ENCODE measurements at regions of chr9 and their contacts with region 1.

Region 1: DNA sequence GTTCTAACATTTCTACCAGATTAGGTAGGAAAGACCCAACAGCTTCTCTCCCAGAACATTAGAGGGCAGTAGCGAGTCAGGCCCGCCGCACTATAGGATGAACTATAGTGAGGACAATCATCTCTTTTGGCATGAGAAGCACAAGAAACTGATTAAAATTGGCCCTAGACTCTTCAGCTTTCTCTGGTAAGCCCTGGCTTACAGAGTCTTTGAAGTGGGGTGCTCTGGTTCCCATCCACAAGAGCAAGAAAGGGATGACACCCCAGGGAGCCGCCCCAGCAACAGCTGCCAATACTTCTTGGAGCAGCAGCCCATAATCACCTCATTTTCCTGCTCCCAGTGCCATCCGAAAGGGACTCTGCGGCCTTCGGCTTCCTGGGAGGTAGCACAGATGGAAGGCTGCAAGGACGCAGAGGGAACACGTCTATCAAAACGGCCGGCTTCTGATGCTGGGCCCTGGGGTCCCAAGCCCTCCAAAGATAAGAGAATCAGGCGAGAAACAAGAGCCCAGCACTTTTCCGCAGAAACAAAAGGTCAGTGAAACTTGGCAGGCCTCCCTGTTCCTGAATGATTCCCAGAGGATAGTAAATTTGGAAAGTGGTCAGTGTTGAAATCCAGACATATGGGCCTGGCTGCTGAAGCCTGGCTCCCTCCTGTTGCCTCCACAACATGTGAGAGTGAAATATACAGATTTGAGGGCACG is 69.3 kb downstream of the HSD17B3 start:
- DNase-seq: peak; percentile 57 to 69
- ATAC-seq: peak; percentile 84 to 94
- H3K4me3 ChIP-seq: no peak overlapping the region
- H3K27ac ChIP-seq: no peak overlapping the region
- H3K4me1 ChIP-seq: no peaks in the 10 kb centered on the region
- CTCF ChIP-seq: peak; percentile 72
- EP300 ChIP-seq: no peak
- POLR2A ChIP-seq: no peak
- RAD21 ChIP-seq: peak; percentile 59 to 77

Region 2: GRCh38 chr9:96249746-96250145 is 17.1 kb after region 1 on chr9:
- CTCF ChIA-PET with region 1: interaction called, 10 read pairs
- POLR2A ChIA-PET with region 1: no interaction called
- DNase-seq: no peak
- ATAC-seq: no peak
- H3K4me3 ChIP-seq: no peak overlapping the region
- H3K27ac ChIP-seq: no peak overlapping the region
- H3K4me1 ChIP-seq: no peaks in the 10 kb centered on the region
- CTCF ChIP-seq: no peak
- EP300 ChIP-seq: no peak
- POLR2A ChIP-seq: no peak
- RAD21 ChIP-seq: no peak

Region 3: GRCh38 chr9:96317335-96317980 is 84.8 kb after region 1 on chr9:
- CTCF ChIA-PET with region 1: interaction called, 42 read pairs
- POLR2A ChIA-PET with region 1: no interaction called
- DNase-seq: peak; percentile 60 to 69
- ATAC-seq: peak; percentile 50 to 89; a peak in 4 of 6 replicates
- H3K4me3 ChIP-seq: no peak overlapping the region
- H3K27ac ChIP-seq: no peak overlapping the region
- H3K4me1 ChIP-seq: no peaks in the 10 kb centered on the region; the same call in 2 of the 3 replicates
- CTCF ChIP-seq: peak; percentile 87
- EP300 ChIP-seq: no peak
- POLR2A ChIP-seq: no peak
- RAD21 ChIP-seq: peak; percentile 83 to 84

Measured in A549 (cell line).